PC-9 (cell line): ENCODE measurements at regions of chr11 and their contacts with region 1.

Region 1: GRCh38 chr11:23585416-23586104 is 725.3 kb upstream of the CCDC179 start:
- DNase-seq: no peak
- H3K4me3 ChIP-seq: no peak overlapping the region
- H3K27ac ChIP-seq: no peak overlapping the region
- H3K4me1 ChIP-seq: no peaks in the 10 kb centered on the region
- H3K27me3 ChIP-seq: no peaks in the 10 kb centered on the region
- CTCF ChIP-seq: no peak

Region 2: GRCh38 chr11:23429569-23429968 is 156.0 kb before region 1 on chr11:
- CTCF ChIA-PET with region 1: no interaction called
- POLR2A ChIA-PET with region 1: no interaction called
- intact Hi-C with region 1: no loop called
- DNase-seq: no peak
- H3K4me3 ChIP-seq: no peak overlapping the region
- H3K27ac ChIP-seq: no peak overlapping the region
- H3K4me1 ChIP-seq: no peaks in the 10 kb centered on the region
- H3K27me3 ChIP-seq: no peaks in the 10 kb centered on the region
- CTCF ChIP-seq: no peak

Region 3: GRCh38 chr11:23457641-23458040 is 127.9 kb before region 1 on chr11:
- CTCF ChIA-PET with region 1: no interaction called
- POLR2A ChIA-PET with region 1: no interaction called
- intact Hi-C with region 1: no loop called
- DNase-seq: no peak
- H3K4me3 ChIP-seq: no peak overlapping the region
- H3K27ac ChIP-seq: no peak overlapping the region
- H3K4me1 ChIP-seq: no peaks in the 10 kb centered on the region
- H3K27me3 ChIP-seq: no peaks in the 10 kb centered on the region
- CTCF ChIP-seq: no peak

Region 4: DNA sequence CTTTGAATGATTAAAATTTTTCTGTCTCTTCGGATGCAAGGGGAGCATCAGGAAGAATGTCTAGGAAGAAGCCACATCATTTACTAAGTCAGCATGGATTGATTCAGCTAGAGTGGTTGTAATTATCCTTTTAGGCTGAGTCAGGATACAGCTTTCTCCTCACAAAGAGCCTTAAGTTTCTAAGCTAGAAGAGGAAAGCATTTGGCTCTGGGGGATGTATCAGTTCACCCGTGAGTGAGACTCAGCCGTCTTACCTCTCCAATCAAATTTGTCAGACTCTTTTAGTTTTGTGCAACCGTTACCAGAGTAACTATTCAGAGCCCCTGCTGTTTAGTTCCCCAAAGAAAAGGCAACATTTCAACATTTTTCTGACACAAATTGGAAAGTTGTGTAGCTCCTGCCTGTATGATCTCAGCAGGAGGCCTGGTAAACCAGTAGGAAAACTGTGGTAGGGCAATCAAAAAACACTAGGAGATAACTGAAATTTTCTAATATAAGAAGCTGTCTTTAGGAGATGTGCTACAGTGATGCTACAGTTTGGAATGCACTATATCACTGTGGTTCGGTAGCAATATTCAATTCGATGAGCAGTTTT is 478.8 kb after region 1 on chr11:
- CTCF ChIA-PET with region 1: no interaction called
- POLR2A ChIA-PET with region 1: interaction called, 15 read pairs
- intact Hi-C with region 1: no loop called
- DNase-seq: no peak
- H3K4me3 ChIP-seq: no peak overlapping the region
- H3K27ac ChIP-seq: no peak overlapping the region
- H3K4me1 ChIP-seq: no peaks in the 10 kb centered on the region
- H3K27me3 ChIP-seq: no peaks in the 10 kb centered on the region
- CTCF ChIP-seq: no peak